ENCODE measurements at regions of chr16 and their contacts with region 1.

Region 1: GRCh38 chr16:58487566-58488351 is 12.2 kb upstream of the NDRG4 start:
- DNase-seq: peak; percentile 76
- H3K4me3 ChIP-seq: no peak overlapping the region
- H3K27ac ChIP-seq: no peak overlapping the region
- H3K4me1 ChIP-seq: no peaks in the 10 kb centered on the region
- H3K27me3 ChIP-seq: no peaks in the 10 kb centered on the region
- CTCF ChIP-seq: peak; percentile 81

Region 2: DNA sequence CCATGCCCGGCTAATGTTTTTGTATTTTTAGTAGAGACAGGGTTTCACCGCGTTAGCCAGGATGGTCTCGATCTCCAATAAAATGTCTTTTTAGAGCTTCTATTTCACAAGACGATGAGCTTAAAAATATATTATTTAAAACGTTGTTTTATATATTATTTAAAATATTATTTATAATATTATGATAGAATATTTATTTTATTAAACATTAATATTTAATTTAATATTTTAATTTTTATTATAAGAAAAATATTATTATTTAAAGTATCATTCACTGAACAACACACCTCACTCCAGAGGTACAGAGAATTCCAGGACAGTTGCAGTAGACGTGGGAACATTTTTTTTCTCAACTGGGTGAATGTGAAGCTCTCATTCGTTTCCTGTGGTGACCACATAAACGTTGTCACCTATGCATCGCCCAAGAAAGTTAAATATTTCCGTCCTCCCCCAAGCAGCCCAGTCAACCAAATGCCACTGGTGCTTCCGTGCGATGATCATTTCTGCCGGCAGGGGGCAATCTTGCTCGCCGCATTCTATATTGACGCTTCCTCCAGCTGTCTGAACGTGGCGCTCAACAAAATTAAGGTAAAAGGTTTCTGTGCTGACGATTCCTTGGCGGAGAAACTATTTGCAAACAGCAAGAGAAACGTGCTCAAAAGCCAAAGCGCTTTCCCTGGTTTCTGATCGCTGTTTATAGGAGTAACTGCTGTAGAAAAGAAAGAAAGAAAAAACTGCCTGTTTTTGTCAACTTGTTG is 151.2 kb before region 1 on chr16:
- intact Hi-C with region 1: loop called (anchors 2 kb)
- DNase-seq: peak; percentile 86
- H3K4me3 ChIP-seq: peak overlapping the region; percentile 7
- H3K27ac ChIP-seq: no peak overlapping the region
- H3K4me1 ChIP-seq: no peaks in the 10 kb centered on the region
- H3K27me3 ChIP-seq: no peaks in the 10 kb centered on the region
- CTCF ChIP-seq: peak; percentile 90

Region 3: DNA sequence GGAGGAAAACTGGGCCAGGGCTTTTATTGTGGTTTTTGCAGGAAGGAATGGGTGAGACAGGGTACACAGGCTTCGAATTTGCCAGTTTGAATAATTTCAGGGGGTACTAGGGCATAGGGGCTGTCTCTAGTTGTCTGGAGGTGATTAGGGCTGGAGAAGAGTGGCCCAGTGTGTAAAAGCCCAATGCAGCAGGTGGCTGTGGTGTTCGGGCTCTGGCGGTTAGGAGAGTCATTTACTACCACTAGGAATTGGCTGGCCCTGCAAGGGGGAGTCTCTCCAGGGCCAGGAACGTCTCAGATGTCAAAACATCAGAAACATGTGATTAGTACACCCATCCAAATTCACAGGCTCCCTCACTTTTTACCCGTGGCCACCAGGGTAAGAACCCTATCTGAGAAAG is 45.2 kb before region 1 on chr16:
- intact Hi-C with region 1: no loop called
- DNase-seq: no peak
- H3K4me3 ChIP-seq: no peak overlapping the region
- H3K27ac ChIP-seq: no peak overlapping the region
- H3K4me1 ChIP-seq: no peaks in the 10 kb centered on the region
- H3K27me3 ChIP-seq: no peaks in the 10 kb centered on the region
- CTCF ChIP-seq: no peak